ENCODE measurements at regions of chr12 and their contacts with region 1.

Region 1: DNA sequence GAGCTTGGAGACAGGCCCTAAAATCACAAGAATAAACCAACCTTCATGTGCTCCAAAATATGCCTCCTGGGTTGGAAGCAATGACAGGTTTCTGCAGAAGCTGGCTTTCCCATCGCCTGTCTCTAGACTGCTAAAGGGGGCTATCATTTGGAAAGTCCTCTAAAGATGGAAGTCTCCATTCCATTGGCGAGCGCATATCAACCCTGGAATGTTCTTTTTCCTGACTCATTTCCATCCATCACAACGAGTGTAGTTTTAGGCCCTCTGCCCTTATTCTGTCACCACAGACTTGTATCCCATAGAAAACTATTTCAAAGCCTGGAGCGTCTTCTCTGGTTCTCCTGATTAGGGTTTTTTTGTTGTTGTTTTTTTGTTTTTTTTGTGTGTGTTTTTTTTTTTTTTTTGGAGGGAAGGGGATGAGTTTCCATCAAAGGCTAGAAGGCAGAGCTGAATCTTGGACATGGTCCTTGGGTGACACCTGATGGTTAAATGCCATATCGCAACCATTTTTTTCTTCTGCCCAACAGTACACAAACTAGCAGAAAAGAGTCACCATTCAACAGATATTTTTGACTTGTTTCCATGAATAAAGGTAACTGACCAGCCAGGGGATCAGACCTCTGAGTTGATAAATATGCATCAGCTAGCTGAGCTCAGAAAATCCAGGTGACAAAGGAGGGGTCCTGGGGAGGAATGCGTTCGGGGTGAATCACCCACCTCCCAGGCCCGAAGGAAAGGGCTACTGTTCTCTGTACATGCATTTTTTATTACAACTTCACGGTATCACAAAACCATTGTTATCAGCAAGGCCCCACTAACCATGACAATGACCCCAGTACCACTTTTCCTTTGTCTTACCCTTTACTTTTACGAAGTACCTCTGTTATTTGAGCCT is 40.5 kb downstream of the KCNA5 start:
- DNase-seq: peak; percentile 78
- ATAC-seq: peak; percentile 56
- H3K4me3 ChIP-seq: no peak overlapping the region
- H3K4me3 Mint-ChIP-seq: no peak overlapping the region
- H3K27ac ChIP-seq: no peak overlapping the region
- H3K27ac Mint-ChIP-seq: no peak overlapping the region
- H3K4me1 ChIP-seq: no peaks in the 10 kb centered on the region
- H3K4me1 Mint-ChIP-seq: no peaks in the 10 kb centered on the region
- H3K27me3 ChIP-seq: no peaks in the 10 kb centered on the region
- H3K27me3 Mint-ChIP-seq: peaks cover 24% of the 10 kb centered on the region
- CTCF ChIP-seq: peak; percentile 92

Region 2: GRCh38 chr12:5034603-5035002 is 49.6 kb before region 1 on chr12:
- CTCF ChIA-PET with region 1: interaction called, 13 read pairs
- POLR2A ChIA-PET with region 1: no interaction called
- intact Hi-C with region 1: no loop called
- DNase-seq: no peak
- ATAC-seq: no peak
- H3K4me3 ChIP-seq: no peak overlapping the region
- H3K4me3 Mint-ChIP-seq: no peak overlapping the region
- H3K27ac ChIP-seq: no peak overlapping the region
- H3K27ac Mint-ChIP-seq: no peak overlapping the region
- H3K4me1 ChIP-seq: no peaks in the 10 kb centered on the region
- H3K4me1 Mint-ChIP-seq: no peaks in the 10 kb centered on the region
- H3K27me3 ChIP-seq: peaks cover 0 to 5% (median 0%) of the 10 kb centered on the region in 4 experiments
- H3K27me3 Mint-ChIP-seq: peaks cover 23% of the 10 kb centered on the region
- CTCF ChIP-seq: no peak

Region 3: GRCh38 chr12:5051913-5052312 is 32.3 kb before region 1 on chr12:
- CTCF ChIA-PET with region 1: interaction called, 15 read pairs
- POLR2A ChIA-PET with region 1: no interaction called
- intact Hi-C with region 1: loop called (anchors 2 kb)
- DNase-seq: peak; percentile 59
- ATAC-seq: peak; percentile 7
- H3K4me3 ChIP-seq: peak overlapping the region in 1 of 5 experiments; percentile 35
- H3K4me3 Mint-ChIP-seq: peak overlapping the region; percentile 63
- H3K27ac ChIP-seq: peak overlapping the region in 1 of 2 donors; percentile 32
- H3K27ac Mint-ChIP-seq: peak overlapping the region; percentile 22
- H3K4me1 ChIP-seq: peaks cover 60 to 63% of the 10 kb centered on the region in 2 donors
- H3K4me1 Mint-ChIP-seq: peaks cover 65% of the 10 kb centered on the region
- H3K27me3 ChIP-seq: peaks cover 0 to 8% (median 2%) of the 10 kb centered on the region in 4 experiments
- H3K27me3 Mint-ChIP-seq: peaks cover 2% of the 10 kb centered on the region
- CTCF ChIP-seq: no peak

Region 4: DNA sequence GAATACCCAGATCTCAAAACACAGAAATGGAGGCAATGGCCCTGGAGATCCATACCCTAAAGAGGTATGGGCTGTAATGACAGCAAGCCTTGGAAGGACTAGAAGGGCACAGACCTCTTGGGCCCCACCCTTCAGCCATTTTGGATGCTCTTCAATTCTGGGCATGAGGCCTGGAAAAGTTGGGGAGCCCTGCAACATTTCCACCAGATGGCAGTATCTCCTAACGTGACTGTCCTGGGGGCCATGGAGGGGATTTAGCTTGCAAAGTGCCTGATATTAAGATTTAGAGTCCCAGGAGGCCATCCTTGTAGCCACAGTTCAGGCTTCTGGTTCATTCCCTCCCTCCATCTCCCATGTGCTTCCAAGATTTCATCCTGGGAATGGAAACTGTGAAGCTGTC is 10.3 kb before region 1 on chr12:
- CTCF ChIA-PET with region 1: interaction called, 17 read pairs
- POLR2A ChIA-PET with region 1: no interaction called
- intact Hi-C with region 1: no loop called
- DNase-seq: no peak
- ATAC-seq: no peak
- H3K4me3 ChIP-seq: no peak overlapping the region
- H3K4me3 Mint-ChIP-seq: no peak overlapping the region
- H3K27ac ChIP-seq: no peak overlapping the region
- H3K27ac Mint-ChIP-seq: no peak overlapping the region
- H3K4me1 ChIP-seq: no peaks in the 10 kb centered on the region
- H3K4me1 Mint-ChIP-seq: peaks cover 2% of the 10 kb centered on the region
- H3K27me3 ChIP-seq: peaks cover 0 to 2% (median 0%) of the 10 kb centered on the region in 4 experiments
- H3K27me3 Mint-ChIP-seq: peaks cover 20% of the 10 kb centered on the region
- CTCF ChIP-seq: no peak

Measured in B cell (primary cell).